IMR-90 (cell line): ENCODE measurements at regions of chr11 and their contacts with region 1.

Region 1: DNA sequence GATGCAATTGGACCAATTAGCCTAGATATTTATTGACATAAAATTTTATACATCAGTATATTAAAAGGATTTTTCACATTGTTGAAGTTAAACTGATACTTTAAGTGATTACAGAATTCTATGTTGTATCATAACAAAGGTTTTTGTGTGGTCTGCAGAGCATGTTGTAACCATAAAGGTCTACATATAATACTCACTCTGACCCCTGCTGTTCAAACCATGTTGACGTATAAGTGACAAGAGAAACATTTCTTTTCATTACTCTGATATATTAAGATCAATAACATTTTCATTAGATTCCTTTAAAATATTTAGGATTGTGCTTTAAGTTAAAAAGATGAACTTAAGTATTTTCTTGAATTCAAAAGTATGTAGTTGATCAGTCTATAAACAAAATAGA is 63.9 kb downstream of the GAS2 start:
- DNase-seq: peak; percentile 1
- ATAC-seq: no peak
- H3K4me3 ChIP-seq: no peak overlapping the region
- H3K27ac ChIP-seq: no peak overlapping the region
- H3K4me1 ChIP-seq: no peaks in the 10 kb centered on the region
- H3K27me3 ChIP-seq: no peaks in the 10 kb centered on the region
- CTCF ChIP-seq: no peak
- POLR2A ChIP-seq: no peak
- RAD21 ChIP-seq: no peak

Region 2: DNA sequence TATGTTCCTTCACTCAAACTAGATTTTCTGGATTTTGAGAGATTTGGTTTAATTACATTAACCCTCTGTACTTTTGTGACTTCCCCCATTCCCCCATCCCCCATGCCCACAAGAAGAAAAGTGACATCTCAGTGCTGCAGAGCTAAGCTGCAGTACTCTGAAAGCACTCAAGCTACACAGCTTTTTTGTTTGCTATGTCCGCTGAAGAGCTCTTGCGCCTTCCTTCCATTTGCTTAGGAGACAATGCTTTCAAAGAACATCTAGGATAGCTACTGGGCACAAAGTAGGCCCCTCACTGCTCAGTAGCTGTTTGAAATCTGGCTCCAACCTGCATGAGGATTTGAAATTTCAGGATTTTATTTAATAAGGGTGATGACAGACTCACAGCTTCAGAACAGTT is 322.4 kb before region 1 on chr11:
- CTCF ChIA-PET with region 1: no interaction called
- POLR2A ChIA-PET with region 1: no interaction called
- dilution Hi-C with region 1: no loop called
- in situ Hi-C with region 1: no loop called
- intact Hi-C with region 1: no loop called
- DNase-seq: no peak
- ATAC-seq: no peak
- H3K4me3 ChIP-seq: no peak overlapping the region
- H3K27ac ChIP-seq: no peak overlapping the region
- H3K4me1 ChIP-seq: no peaks in the 10 kb centered on the region
- H3K27me3 ChIP-seq: no peaks in the 10 kb centered on the region
- CTCF ChIP-seq: no peak
- POLR2A ChIP-seq: no peak
- RAD21 ChIP-seq: no peak

Region 3: DNA sequence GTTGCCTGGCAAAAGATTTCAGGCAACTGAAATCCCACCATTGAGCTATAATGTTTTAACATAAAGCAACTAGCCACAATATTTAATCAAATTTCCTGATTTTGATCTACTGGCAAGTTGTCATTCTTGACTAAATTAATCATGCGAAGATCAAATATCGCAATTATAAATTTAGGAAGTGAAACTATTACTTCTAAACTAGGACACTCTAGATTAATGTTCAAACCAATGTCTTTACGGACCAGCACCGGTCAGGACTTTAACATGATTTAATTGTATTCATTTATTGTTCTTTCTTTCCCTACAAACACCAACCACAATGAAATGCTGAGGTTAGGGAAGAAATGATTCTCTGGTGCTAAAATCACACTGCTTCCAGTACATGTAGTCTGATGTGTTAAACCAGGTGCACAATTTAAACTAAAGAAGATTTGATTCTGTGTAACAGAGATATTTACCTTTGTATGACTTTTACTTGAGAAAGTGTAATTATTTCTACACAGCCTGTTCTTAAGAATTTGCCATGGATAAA is 49.0 kb before region 1 on chr11:
- CTCF ChIA-PET with region 1: no interaction called
- POLR2A ChIA-PET with region 1: no interaction called
- dilution Hi-C with region 1: no loop called
- in situ Hi-C with region 1: no loop called
- intact Hi-C with region 1: loop called (anchors 5 kb)
- DNase-seq: no peak
- ATAC-seq: no peak
- H3K4me3 ChIP-seq: no peak overlapping the region
- H3K27ac ChIP-seq: no peak overlapping the region
- H3K4me1 ChIP-seq: no peaks in the 10 kb centered on the region
- H3K27me3 ChIP-seq: no peaks in the 10 kb centered on the region
- CTCF ChIP-seq: no peak
- POLR2A ChIP-seq: no peak
- RAD21 ChIP-seq: no peak

Region 4: DNA sequence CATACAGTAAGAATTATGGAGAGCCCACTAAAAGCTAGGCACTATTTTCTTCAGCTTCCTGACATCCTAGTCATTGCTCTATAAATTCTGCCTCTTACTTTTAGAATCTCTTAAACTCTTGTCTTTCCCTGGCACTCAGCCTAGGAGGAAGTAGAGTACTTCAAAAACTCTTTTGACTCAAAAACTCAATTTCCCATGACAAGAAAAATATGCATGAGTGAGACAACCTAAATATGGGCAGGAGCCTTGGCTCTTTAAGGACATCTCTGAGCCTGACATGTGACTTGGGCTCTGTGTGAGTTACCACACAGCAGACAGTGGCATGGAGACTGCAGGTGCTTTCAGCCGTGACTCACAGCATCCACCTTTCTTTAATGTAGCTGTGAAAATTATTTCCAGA is 227.5 kb after region 1 on chr11:
- CTCF ChIA-PET with region 1: no interaction called
- POLR2A ChIA-PET with region 1: no interaction called
- dilution Hi-C with region 1: no loop called
- in situ Hi-C with region 1: no loop called
- intact Hi-C with region 1: no loop called
- DNase-seq: no peak
- ATAC-seq: no peak
- H3K4me3 ChIP-seq: no peak overlapping the region
- H3K27ac ChIP-seq: no peak overlapping the region
- H3K4me1 ChIP-seq: no peaks in the 10 kb centered on the region
- H3K27me3 ChIP-seq: no peaks in the 10 kb centered on the region
- CTCF ChIP-seq: no peak
- POLR2A ChIP-seq: no peak
- RAD21 ChIP-seq: no peak